Activated CD4-positive, alpha-beta memory T cell treated with anti-CD3 and anti-CD28 coated beads, Interleukin-2, amount 10 ng/mL, durations not matched to agents 7 days and 5 days (primary cell): ENCODE measurements at regions of chr1 and their contacts with region 1.

Region 1: GRCh38 chr1:231211005-231211857 is 29.8 kb upstream of the GNPAT start:
- DNase-seq: peak; percentile 89
- H3K4me3 Mint-ChIP-seq: peak overlapping the region; percentile 72
- H3K27ac Mint-ChIP-seq: no peak overlapping the region
- H3K4me1 Mint-ChIP-seq: peaks cover 12% of the 10 kb centered on the region
- H3K27me3 Mint-ChIP-seq: peaks cover 5% of the 10 kb centered on the region

Region 2: GRCh38 chr1:230917284-230918135 is 293.7 kb before region 1 on chr1:
- CTCF ChIA-PET with region 1: interaction called, 12 read pairs
- POLR2A ChIA-PET with region 1: no interaction called
- DNase-seq: peak; percentile 76
- H3K4me3 Mint-ChIP-seq: no peak overlapping the region
- H3K27ac Mint-ChIP-seq: no peak overlapping the region
- H3K4me1 Mint-ChIP-seq: peaks cover 3% of the 10 kb centered on the region
- H3K27me3 Mint-ChIP-seq: no peaks in the 10 kb centered on the region

Region 3: DNA sequence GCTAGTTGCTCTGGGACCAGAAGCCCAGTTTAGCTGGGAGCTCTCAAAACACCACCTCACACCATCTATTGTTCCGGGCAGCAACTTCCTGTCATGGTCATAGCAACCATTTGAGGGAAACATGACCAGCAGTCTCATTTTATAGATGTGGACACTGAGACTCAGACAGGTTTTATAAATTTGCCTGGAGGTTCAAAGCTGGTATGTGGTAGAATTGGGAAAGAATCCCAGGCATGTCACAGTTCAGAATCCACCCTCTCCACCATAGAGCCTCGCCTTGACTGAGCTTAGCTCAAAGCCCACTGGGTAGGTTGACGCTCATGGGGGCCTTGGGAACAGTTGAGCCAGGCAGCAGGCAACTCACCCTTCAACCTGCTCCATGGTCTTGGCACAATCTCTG is 63.3 kb before region 1 on chr1:
- CTCF ChIA-PET with region 1: no interaction called
- POLR2A ChIA-PET with region 1: no interaction called
- DNase-seq: no peak
- H3K4me3 Mint-ChIP-seq: no peak overlapping the region
- H3K27ac Mint-ChIP-seq: no peak overlapping the region
- H3K4me1 Mint-ChIP-seq: no peaks in the 10 kb centered on the region
- H3K27me3 Mint-ChIP-seq: peaks cover 29% of the 10 kb centered on the region